AG04449 (cell line): ENCODE measurements at regions of chr15 and their contacts with region 1.

Region 1: GRCh38 chr15:93997084-93997918 is 234.1 kb upstream of the MCTP2 start:
- DNase-seq: no peak
- H3K4me3 ChIP-seq: no peak overlapping the region
- CTCF ChIP-seq: peak; percentile 71

Region 2: DNA sequence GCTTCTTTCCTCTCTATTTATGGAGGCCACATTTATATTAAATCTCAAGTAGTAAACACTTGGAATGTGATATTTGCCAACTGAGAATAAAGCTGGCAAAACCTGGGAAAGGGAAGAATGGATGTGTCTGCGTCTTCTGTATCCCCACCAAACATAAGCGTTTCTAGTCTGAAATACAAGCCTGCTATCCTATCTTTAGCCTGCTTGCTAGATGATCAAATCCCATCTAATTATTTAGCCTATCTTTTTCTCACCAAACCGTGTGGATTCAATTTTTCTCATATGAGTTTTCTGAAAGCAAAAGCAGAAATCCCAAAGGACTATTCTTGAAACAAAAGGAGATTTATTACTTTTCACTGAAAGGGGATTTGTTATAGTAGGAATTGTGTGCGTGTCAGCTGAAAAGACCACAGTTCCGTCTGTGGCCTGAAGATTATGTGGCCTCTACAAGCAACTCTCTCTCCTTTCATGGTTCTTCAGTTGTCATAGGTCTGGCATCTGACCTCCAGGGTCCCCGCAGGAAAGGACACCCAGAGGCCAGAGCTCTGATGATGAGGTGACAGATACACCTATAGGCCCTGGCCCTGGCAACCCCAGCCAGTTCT is 31.9 kb before region 1 on chr15:
- CTCF ChIA-PET with region 1: no interaction called
- POLR2A ChIA-PET with region 1: no interaction called
- DNase-seq: no peak
- H3K4me3 ChIP-seq: no peak overlapping the region
- CTCF ChIP-seq: no peak

Region 3: GRCh38 chr15:93987111-93987467 is 10.2 kb before region 1 on chr15:
- CTCF ChIA-PET with region 1: interaction called, 13 read pairs
- POLR2A ChIA-PET with region 1: no interaction called
- DNase-seq: no peak
- H3K4me3 ChIP-seq: no peak overlapping the region
- CTCF ChIP-seq: no peak

Region 4: GRCh38 chr15:94080418-94080817 is 83.1 kb after region 1 on chr15:
- CTCF ChIA-PET with region 1: interaction called, 21 read pairs
- POLR2A ChIA-PET with region 1: no interaction called
- DNase-seq: no peak
- H3K4me3 ChIP-seq: no peak overlapping the region
- CTCF ChIP-seq: no peak